ENCODE measurements at regions of chr19 and their contacts with region 1.

Region 1: GRCh38 chr19:38506723-38507550 is 73.4 kb downstream of the RYR1 start:
- DNase-seq: peak; percentile 100
- ATAC-seq: peak; percentile 92
- H3K4me3 Mint-ChIP-seq: peak overlapping the region; percentile 20; the same call in 1 of the 2 replicates
- H3K27ac Mint-ChIP-seq: peak overlapping the region; percentile 8; the same call in 1 of the 2 replicates
- H3K4me1 Mint-ChIP-seq: peaks cover 9% of the 10 kb centered on the region; the same call in 1 of the 2 replicates
- H3K27me3 Mint-ChIP-seq: no peaks in the 10 kb centered on the region
- CTCF ChIP-seq: no peak

Region 2: GRCh38 chr19:38463365-38463764 is 43.6 kb before region 1 on chr19:
- CTCF ChIA-PET with region 1: no interaction called
- POLR2A ChIA-PET with region 1: interaction called, 11 read pairs
- DNase-seq: no peak
- ATAC-seq: no peak
- H3K4me3 Mint-ChIP-seq: no peak overlapping the region
- H3K27ac Mint-ChIP-seq: no peak overlapping the region
- H3K4me1 Mint-ChIP-seq: no peaks in the 10 kb centered on the region
- H3K27me3 Mint-ChIP-seq: no peaks in the 10 kb centered on the region
- CTCF ChIP-seq: no peak

Region 3: DNA sequence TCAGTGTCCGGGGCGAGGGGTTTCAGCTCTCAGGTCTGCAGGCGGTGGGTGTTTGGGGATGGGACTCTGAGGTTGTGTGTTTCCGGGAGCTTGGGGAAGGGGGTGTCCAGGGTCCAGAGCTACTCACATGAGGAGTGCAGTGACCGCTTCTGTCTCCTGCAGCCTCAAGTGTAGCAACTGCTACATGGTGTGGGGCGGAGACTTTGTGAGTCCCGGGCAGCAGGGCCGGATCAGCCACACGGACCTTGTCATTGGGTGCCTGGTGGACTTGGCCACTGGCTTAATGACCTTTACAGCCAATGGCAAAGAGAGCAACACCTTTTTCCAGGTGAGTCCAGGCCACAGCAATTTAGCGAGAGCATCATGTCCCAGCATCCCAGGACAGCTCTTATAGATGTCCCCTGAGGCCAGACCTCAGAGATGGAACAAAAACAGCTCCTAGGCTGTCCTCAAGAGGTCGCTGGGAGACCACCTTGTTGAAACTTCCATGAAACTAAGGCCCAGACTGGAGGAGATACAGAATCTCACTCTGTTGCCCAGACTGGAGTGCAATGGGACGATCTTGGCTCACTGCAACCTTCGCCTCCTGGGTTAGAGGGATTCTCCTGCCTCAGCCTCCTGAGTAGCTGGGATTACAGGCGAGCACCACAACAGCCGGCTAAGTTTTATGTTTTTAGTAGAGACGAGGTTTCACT is 28.5 kb before region 1 on chr19:
- CTCF ChIA-PET with region 1: interaction called, 10 read pairs
- POLR2A ChIA-PET with region 1: interaction called, 3 read pairs
- DNase-seq: peak; percentile 39
- ATAC-seq: peak; percentile 81
- H3K4me3 Mint-ChIP-seq: no peak overlapping the region
- H3K27ac Mint-ChIP-seq: peak overlapping the region; percentile 48; the same call in 1 of the 2 replicates
- H3K4me1 Mint-ChIP-seq: no peaks in the 10 kb centered on the region
- H3K27me3 Mint-ChIP-seq: no peaks in the 10 kb centered on the region
- CTCF ChIP-seq: 0 out of 2 replicates have a peak, but pooled peaks have one; percentile 25

Region 4: GRCh38 chr19:38569368-38569983 is 62.5 kb after region 1 on chr19:
- CTCF ChIA-PET with region 1: no interaction called
- POLR2A ChIA-PET with region 1: no interaction called
- DNase-seq: no peak
- ATAC-seq: no peak
- H3K4me3 Mint-ChIP-seq: no peak overlapping the region
- H3K27ac Mint-ChIP-seq: no peak overlapping the region
- H3K4me1 Mint-ChIP-seq: no peaks in the 10 kb centered on the region
- H3K27me3 Mint-ChIP-seq: no peaks in the 10 kb centered on the region; the same call in 1 of the 2 replicates
- CTCF ChIP-seq: no peak

Region 5: DNA sequence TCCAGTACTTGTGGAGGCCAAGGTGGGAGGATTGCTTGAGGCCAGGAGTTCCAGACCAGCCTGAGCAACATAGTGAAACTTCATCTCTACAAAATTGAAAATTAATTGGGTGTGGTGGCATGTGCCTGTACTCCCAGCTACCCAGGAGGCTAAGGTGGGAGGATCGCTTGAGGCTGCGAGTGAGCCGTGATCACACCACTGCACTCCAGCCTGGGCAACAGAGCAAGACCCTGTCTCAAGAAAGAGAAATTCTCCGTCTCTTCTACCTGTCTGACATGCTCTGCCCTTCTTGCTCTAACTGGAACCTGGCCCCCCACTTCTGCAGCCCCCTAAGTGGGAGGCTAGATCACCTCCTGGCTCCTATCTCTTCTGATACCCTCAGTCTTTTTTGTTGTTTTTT is 119.5 kb after region 1 on chr19:
- CTCF ChIA-PET with region 1: no interaction called
- POLR2A ChIA-PET with region 1: no interaction called
- DNase-seq: no peak
- ATAC-seq: no peak
- H3K4me3 Mint-ChIP-seq: no peak overlapping the region
- H3K27ac Mint-ChIP-seq: no peak overlapping the region
- H3K4me1 Mint-ChIP-seq: peaks cover 27% of the 10 kb centered on the region
- H3K27me3 Mint-ChIP-seq: no peaks in the 10 kb centered on the region
- CTCF ChIP-seq: no peak

Region 6: GRCh38 chr19:38666663-38667511 is 159.9 kb after region 1 on chr19:
- CTCF ChIA-PET with region 1: no interaction called
- POLR2A ChIA-PET with region 1: no interaction called
- DNase-seq: no peak
- ATAC-seq: peak; percentile 34
- H3K4me3 Mint-ChIP-seq: peak overlapping the region; percentile 34
- H3K27ac Mint-ChIP-seq: peak overlapping the region; percentile 100
- H3K4me1 Mint-ChIP-seq: peaks cover 98% of the 10 kb centered on the region
- H3K27me3 Mint-ChIP-seq: no peaks in the 10 kb centered on the region
- CTCF ChIP-seq: no peak

Measured in WTC11 (cell line).